ENCODE measurements at regions of chr2 and their contacts with region 1.

Region 1: DNA sequence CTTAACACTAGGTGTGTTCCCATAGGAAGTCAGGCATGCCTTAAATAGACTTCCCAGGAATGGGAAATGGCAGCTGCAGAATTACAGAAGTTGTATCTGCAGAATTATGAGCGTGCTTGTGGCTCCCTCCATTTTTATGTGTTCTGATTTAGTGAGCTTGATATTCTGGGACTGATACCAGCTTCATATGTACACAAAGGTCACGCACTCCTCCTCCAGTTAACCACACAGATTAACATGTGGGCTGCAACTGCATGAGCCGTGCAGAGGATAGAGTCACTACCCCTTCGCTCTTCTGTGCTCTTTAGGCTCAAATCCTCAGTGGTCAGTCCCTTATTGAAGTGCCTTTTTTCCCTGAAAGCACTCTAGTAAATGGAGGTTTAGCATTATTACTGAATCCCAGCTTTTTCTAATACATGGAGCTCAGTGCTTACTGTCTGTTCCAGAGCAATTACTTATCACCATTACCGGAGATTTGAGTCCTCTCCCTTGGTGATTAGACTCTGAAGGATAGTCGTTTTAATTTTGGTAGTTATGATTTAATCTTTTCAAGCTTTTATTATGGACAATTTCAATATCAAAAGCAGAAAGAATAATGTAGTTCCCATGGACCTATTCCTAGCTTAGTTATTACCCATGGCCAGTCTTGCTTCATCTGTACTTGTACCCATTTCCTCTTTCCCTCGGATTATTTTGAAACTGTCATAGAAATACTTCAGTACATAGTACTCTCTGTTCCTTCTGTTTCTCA is 238.3 kb downstream of the PRKCE start:
- H3K4me3 Mint-ChIP-seq: peak overlapping the region; percentile 57
- H3K27ac Mint-ChIP-seq: peak overlapping the region; percentile 56
- H3K4me1 Mint-ChIP-seq: peaks cover 89% of the 10 kb centered on the region
- H3K27me3 Mint-ChIP-seq: peaks cover 15% of the 10 kb centered on the region

Region 2: DNA sequence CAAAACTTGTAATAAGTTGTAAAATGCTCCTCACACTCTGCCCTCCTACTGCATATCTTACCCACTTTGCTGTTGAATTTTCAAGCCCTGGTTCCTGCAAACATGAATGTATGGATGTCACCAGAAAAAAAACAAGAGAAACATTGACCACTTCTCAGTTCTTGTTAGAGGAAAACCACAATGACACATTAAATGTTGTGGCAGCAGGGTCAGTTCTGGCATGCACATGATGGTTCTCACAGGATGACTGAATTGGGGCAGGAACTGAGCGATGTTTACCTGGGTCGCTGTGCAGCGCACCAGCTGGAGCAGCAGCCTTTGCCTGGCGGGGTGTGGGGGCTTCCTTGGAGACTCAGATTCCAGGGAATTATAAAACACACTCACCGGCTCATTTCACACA is 252.4 kb before region 1 on chr2:
- intact Hi-C with region 1: loop called (anchors 5 kb)
- H3K4me3 Mint-ChIP-seq: no peak overlapping the region
- H3K27ac Mint-ChIP-seq: peak overlapping the region; percentile 55
- H3K4me1 Mint-ChIP-seq: peaks cover 19% of the 10 kb centered on the region
- H3K27me3 Mint-ChIP-seq: peaks cover 41% of the 10 kb centered on the region

Region 3: DNA sequence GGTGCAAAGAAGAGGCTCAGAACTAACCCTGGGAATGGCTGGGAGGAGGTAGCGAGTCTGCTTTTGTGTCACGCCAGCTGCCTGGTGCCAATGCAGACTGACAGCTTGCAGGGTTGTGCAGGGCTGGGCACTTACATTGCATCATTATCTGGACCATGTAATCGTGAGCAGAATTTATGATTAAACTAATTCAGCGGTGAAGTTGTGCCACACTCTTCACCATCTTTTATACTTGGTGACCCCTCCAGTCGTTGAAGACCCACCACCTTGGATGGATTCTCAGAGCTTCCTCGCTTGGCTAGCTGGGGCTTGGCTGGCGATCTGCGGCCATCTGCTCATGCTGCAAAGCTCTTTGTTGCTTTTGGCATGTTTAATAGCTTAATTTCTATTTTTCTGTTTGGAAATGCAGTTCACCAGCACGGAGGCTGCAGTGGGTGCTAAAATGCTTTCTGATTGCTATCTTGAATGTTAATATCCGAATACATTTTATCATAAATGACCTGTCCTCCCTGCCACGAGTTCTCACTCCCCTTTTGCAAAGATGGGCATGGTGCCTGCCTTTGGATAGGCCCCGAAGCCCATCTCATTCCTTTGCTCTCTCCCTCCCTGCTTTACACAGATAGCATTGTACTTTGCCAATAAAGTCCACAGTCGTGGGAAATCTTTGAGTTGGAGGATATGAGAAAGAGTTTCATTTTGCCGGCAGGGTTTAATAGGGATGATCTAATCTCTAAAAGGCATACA is 50.1 kb before region 1 on chr2:
- intact Hi-C with region 1: loop called (anchors 5 kb)
- H3K4me3 Mint-ChIP-seq: no peak overlapping the region
- H3K27ac Mint-ChIP-seq: no peak overlapping the region
- H3K4me1 Mint-ChIP-seq: peaks cover 72% of the 10 kb centered on the region
- H3K27me3 Mint-ChIP-seq: peaks cover 13% of the 10 kb centered on the region

Region 4: DNA sequence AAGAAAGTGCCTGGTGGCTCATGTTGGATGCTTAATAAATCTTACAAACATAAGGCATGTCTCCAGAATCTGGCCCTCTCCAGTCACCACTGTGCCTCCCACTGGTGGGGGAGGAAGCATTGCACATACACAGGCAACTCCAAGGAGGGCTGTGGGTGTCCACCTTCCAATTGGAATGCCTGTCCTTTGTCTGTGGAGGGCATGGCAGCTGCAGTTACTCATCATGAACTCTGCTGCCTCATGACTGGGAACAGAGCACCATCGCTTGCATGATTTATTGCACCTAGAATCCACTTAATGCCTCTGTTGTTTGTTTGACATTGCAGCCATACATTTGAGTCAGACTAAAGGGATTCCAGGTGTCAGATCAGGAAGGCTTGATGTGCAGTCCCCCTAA is 40.6 kb after region 1 on chr2:
- intact Hi-C with region 1: loop called (anchors 5 kb)
- H3K4me3 Mint-ChIP-seq: no peak overlapping the region
- H3K27ac Mint-ChIP-seq: no peak overlapping the region
- H3K4me1 Mint-ChIP-seq: peaks cover 13% of the 10 kb centered on the region
- H3K27me3 Mint-ChIP-seq: peaks cover 2% of the 10 kb centered on the region

Region 5: GRCh38 chr2:46010925-46011490 is 121.2 kb after region 1 on chr2:
- intact Hi-C with region 1: no loop called
- H3K4me3 Mint-ChIP-seq: no peak overlapping the region
- H3K27ac Mint-ChIP-seq: no peak overlapping the region
- H3K4me1 Mint-ChIP-seq: no peaks in the 10 kb centered on the region
- H3K27me3 Mint-ChIP-seq: no peaks in the 10 kb centered on the region

Measured in dendritic cell treated with granulocyte-macrophage colony-stimulating factor and Interleukin-4, amounts not matched to agents 40 ng/mL and 50 ng/mL, for 4 days (primary cell).